Activated CD8-positive, alpha-beta T cell treated with anti-CD3 and anti-CD28 coated beads, Interleukin-2, amount 10 ng/mL, durations not matched to agents 7 days and 5 days (primary cell): ENCODE measurements at regions of chr6 and their contacts with region 1.

Region 1: GRCh38 chr6:11172501-11173332 is 59.8 kb downstream of the NEDD9 start:
- DNase-seq: peak; percentile 83
- ATAC-seq: peak; percentile 79
- H3K4me3 Mint-ChIP-seq: no peak overlapping the region
- H3K27ac Mint-ChIP-seq: no peak overlapping the region
- H3K4me1 Mint-ChIP-seq: peaks cover 22% of the 10 kb centered on the region
- H3K27me3 Mint-ChIP-seq: no peaks in the 10 kb centered on the region

Region 2: GRCh38 chr6:11207199-11207968 is 34.7 kb after region 1 on chr6:
- CTCF ChIA-PET with region 1: interaction called, 18 read pairs
- POLR2A ChIA-PET with region 1: no interaction called
- DNase-seq: no peak
- ATAC-seq: no peak
- H3K4me3 Mint-ChIP-seq: no peak overlapping the region
- H3K27ac Mint-ChIP-seq: no peak overlapping the region
- H3K4me1 Mint-ChIP-seq: peaks cover 91% of the 10 kb centered on the region
- H3K27me3 Mint-ChIP-seq: no peaks in the 10 kb centered on the region